H1 (cell line): ENCODE measurements at regions of chr16 and their contacts with region 1.

Region 1: DNA sequence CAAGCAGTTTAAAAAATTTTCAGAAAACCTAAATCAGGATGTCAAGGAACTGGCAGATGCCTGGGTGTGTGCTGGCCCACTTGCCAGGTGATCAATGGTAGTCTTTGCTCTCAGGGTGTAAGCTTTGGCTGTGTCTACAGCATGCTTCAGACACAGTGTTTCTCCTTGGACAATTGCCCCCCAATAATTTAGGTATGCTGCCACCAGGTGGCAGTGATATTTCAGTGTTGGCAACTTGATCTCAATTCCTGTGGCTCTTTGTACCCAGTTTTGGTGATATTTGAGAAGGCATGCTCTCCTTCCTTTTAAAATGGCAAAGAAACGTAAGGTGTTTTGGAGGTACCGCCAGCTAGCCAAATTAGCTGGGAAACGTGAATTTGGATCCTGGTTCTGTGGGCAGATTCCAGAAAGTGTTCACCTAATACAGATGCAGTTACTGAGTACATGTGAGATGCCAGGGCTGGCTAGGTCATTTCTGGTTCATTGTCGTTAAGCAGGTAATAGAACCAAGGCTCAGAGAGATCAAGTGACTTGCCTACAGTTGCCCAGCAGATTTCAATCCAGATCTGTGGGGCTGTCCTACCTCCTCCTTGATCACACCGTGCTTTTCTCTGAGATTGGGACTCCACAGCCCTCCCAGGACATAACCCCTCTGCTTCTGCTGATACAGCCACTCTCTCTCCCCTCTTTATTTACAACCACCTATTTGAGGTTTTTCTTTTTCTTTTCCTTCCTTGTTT is 155.6 kb upstream of the PLCG2 start:
- DNase-seq: no peak
- H3K4me3 ChIP-seq: no peak overlapping the region
- H3K27ac ChIP-seq: no peak overlapping the region
- H3K4me1 ChIP-seq: peaks cover 0 to 3% (median 1%) of the 10 kb centered on the region in 4 experiments; a peak in 3 of 7 replicates
- H3K27me3 ChIP-seq: no peaks in the 10 kb centered on the region
- CTCF ChIP-seq: peak in 2 of 3 experiments; percentile 67 to 69; a peak in 3 of 4 replicates
- EP300 ChIP-seq: no peak
- POLR2A ChIP-seq: no peak
- RAD21 ChIP-seq: peak; percentile 82 to 83

Region 2: GRCh38 chr16:81403616-81404373 is 219.7 kb before region 1 on chr16:
- CTCF ChIA-PET with region 1: interaction called, 10 read pairs
- POLR2A ChIA-PET with region 1: no interaction called
- DNase-seq: peak; percentile 53 to 97
- H3K4me3 ChIP-seq: peak overlapping the region in 2 of 4 experiments; percentile 19 to 49; a peak in 4 of 8 replicates
- H3K27ac ChIP-seq: no peak overlapping the region
- H3K4me1 ChIP-seq: peaks cover 0 to 5% (median 2%) of the 10 kb centered on the region in 4 experiments; a peak in 4 of 7 replicates
- H3K27me3 ChIP-seq: no peaks in the 10 kb centered on the region; a peak in 2 of 7 replicates
- CTCF ChIP-seq: peak; percentile 92 to 95 (median 93)
- EP300 ChIP-seq: no peak
- POLR2A ChIP-seq: no peak
- RAD21 ChIP-seq: peak; percentile 98 to 99

Region 3: DNA sequence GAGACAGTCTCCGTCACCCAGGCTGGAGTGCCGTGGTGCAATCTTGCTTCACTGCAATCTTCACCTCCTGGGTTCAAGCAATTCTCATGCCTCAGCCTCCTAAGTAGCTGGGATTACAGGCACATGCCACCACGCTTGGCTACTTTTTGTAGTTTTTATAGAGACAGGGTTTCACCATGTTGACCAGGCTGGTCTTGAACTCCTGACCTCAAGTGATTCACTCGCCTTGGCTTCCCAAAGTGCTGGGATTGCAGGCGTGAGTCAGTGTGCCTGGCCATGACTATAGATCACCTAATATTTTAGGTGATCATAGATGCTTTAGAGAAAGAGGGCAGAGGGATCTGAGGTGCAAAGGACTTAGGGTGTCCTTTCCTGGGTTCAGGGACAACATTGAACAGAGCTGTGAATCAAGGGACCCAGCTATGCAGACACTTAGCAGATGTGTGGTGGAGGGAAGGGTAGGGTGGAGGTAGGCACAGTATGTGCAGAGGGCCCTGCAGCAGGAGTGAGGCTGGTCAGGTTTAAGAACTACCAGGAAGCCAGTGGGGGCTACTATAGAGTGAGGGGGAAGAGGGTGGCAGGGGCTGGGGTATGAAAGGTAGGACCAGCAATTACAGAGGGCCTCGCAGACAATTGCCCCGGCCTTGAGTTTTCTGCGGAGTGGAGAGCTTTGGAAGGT is 62.4 kb before region 1 on chr16:
- CTCF ChIA-PET with region 1: no interaction called
- POLR2A ChIA-PET with region 1: no interaction called
- DNase-seq: no peak
- H3K4me3 ChIP-seq: no peak overlapping the region
- H3K27ac ChIP-seq: no peak overlapping the region
- H3K4me1 ChIP-seq: peaks cover 0 to 4% (median 2%) of the 10 kb centered on the region in 4 experiments; a peak in 3 of 7 replicates
- H3K27me3 ChIP-seq: no peaks in the 10 kb centered on the region
- CTCF ChIP-seq: no peak
- EP300 ChIP-seq: no peak
- POLR2A ChIP-seq: no peak
- RAD21 ChIP-seq: no peak

Region 4: GRCh38 chr16:81610144-81610842 is 13.2 kb before region 1 on chr16:
- CTCF ChIA-PET with region 1: interaction called, 19 read pairs
- POLR2A ChIA-PET with region 1: no interaction called
- DNase-seq: no peak
- H3K4me3 ChIP-seq: no peak overlapping the region
- H3K27ac ChIP-seq: no peak overlapping the region
- H3K4me1 ChIP-seq: no peaks in the 10 kb centered on the region; a peak in 1 of 7 replicates
- H3K27me3 ChIP-seq: no peaks in the 10 kb centered on the region; a peak in 1 of 7 replicates
- CTCF ChIP-seq: no peak
- EP300 ChIP-seq: no peak
- POLR2A ChIP-seq: no peak
- RAD21 ChIP-seq: no peak

Region 5: DNA sequence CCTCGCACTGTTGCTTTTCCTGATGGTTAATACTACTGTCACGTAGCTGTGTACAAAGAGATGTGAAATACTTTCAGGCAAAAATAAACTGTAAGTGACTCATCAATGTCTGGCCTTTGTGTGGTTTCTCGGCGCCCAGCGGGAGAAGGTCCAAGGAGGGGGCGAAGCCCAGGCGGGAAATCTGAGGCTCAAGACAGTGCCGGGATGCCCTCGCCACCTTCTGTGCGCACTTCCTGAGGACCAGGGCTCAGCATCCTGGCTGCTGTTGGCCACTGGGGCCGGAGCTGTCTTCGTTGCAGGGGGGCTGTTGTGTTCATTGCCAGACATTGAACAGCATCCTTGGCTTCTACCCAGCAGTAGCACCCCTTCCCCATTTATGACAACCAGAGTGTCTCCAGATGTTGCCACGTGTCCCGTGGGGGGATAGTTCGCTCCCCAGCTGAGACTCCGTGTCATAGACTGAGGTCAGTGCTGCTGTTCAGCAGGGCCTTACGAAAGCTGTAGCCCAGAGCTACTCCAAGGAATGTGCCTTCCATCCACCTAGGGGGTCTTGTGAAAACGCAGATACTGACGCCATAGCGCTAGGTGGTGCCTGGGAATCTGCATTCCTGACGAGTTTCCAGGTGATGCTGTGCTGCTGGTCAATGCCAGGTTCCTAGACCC is 88.3 kb after region 1 on chr16:
- CTCF ChIA-PET with region 1: interaction called, 31 read pairs
- POLR2A ChIA-PET with region 1: no interaction called
- DNase-seq: no peak
- H3K4me3 ChIP-seq: no peak overlapping the region
- H3K27ac ChIP-seq: no peak overlapping the region
- H3K4me1 ChIP-seq: peaks cover 0 to 41% (median 26%) of the 10 kb centered on the region in 4 experiments; a peak in 6 of 7 replicates
- H3K27me3 ChIP-seq: no peaks in the 10 kb centered on the region
- CTCF ChIP-seq: no peak
- EP300 ChIP-seq: no peak
- POLR2A ChIP-seq: no peak
- RAD21 ChIP-seq: no peak; a peak in 1 of 4 replicates

Region 6: DNA sequence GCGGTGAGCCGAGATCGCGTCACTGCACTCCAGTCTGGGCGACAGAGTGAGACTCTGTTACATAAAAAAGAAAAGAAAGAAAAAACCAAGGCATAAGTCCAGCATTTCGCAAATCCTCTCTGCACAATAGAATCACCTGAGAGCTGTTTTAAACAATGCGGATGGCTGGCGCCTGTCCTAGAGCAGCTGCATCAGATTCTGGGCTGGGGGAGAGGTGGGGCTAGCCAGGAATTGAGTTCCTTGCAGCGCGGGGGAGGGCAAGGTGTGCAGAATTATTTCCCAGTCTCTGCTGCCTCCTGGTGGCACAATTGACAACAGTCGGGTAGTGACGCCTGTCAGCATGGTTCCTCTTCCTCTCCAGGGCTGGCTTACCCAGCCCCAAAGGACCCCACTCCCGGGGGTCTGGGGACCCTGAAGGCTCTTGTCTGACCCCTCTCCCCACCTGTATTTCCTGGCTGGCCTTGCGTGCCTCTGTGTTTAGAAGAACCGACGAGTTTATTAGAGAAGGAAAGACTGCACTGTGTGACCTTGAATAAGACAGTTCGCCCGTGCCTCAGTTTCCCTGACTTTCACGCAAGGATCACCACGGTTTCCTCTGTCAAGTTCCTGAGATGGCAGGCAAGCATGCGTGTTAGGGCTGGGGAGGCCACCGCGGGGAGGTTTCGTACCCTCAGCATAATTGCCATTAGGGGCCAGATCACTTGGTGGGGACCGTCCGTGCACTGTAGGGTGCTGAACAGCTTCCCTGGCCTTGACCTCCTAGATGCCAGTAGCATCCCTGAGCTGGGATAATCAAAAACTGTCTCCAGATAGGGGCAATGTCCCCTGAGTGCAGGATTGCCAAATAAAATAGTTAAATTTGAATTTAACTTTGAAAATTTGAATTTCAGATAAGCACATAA is 114.6 kb after region 1 on chr16:
- CTCF ChIA-PET with region 1: interaction called, 11 read pairs
- POLR2A ChIA-PET with region 1: no interaction called
- DNase-seq: peak; percentile 73 to 92
- H3K4me3 ChIP-seq: 0 out of 8 replicates have a peak overlapping the region, but pooled peaks of 1 of the 4 experiments have one; percentile 30
- H3K27ac ChIP-seq: no peak overlapping the region
- H3K4me1 ChIP-seq: peaks cover 0 to 2% (median 0%) of the 10 kb centered on the region in 4 experiments; a peak in 3 of 7 replicates
- H3K27me3 ChIP-seq: no peaks in the 10 kb centered on the region
- CTCF ChIP-seq: peak; percentile 88 to 95 (median 89)
- EP300 ChIP-seq: peak in 1 of 2 experiments; percentile 71; a peak in 1 of 3 replicates
- POLR2A ChIP-seq: no peak
- RAD21 ChIP-seq: peak; percentile 96 to 98

Region 7: DNA sequence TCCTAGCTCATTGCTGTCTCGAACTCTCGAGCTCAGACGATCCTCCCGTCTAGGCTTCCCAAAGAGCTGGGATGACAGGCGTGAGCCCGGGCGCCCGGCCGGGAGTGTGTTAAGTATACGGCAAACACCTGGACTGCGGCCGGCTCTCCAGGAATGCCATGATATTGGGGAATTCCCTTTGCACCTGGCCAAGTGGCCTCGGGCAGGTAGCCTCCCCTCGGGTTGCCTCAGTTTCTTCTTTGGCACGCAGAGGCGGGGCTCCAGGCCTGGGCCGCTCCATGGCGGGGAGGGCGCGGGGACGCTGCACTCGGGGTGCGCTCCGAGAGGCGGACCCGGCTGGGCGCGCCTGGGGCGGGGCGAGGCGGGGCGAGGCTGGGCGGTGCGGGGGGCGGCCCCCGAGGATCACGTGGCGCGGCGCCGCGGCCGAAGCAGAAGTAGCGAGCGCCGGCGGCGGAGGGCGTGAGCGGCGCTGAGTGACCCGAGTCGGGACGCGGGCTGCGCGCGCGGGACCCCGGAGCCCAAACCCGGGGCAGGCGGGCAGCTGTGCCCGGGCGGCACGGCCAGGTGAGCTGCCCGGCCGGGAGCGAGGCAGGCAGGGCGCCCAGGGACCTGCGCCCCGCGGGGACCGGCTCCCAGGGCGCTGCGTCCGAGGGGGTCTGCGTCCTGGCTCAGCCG is 155.5 kb after region 1 on chr16 and contains the start of gene PLCG2:
- CTCF ChIA-PET with region 1: no interaction called
- POLR2A ChIA-PET with region 1: no interaction called
- DNase-seq: peak in 1 of 2 experiments; percentile 87
- H3K4me3 ChIP-seq: peak within 1 kb of the TSS; percentile 42 to 67 (median 56)
- H3K27ac ChIP-seq: no peak within 1 kb of the TSS
- H3K4me1 ChIP-seq: peaks cover 0 to 6% (median under 1%) of the 10 kb centered on the region in 4 experiments; a peak in 4 of 7 replicates
- H3K27me3 ChIP-seq: peaks cover 10 to 31% (median 23%) of the 10 kb centered on the region in 4 experiments
- CTCF ChIP-seq: no peak
- EP300 ChIP-seq: no peak
- POLR2A ChIP-seq: no peak
- RAD21 ChIP-seq: no peak
- total RNA-seq, gene PLCG2: 5.6 and 6.9 TPM in 2 replicates

Region 8: GRCh38 chr16:82043680-82044584 is 420.4 kb after region 1 on chr16:
- CTCF ChIA-PET with region 1: no interaction called
- POLR2A ChIA-PET with region 1: no interaction called
- DNase-seq: no peak
- H3K4me3 ChIP-seq: no peak overlapping the region
- H3K27ac ChIP-seq: no peak overlapping the region
- H3K4me1 ChIP-seq: no peaks in the 10 kb centered on the region
- H3K27me3 ChIP-seq: no peaks in the 10 kb centered on the region
- CTCF ChIP-seq: no peak
- EP300 ChIP-seq: no peak
- POLR2A ChIP-seq: no peak
- RAD21 ChIP-seq: no peak